ENCODE measurements at regions of chr4 and their contacts with region 1.

Region 1: DNA sequence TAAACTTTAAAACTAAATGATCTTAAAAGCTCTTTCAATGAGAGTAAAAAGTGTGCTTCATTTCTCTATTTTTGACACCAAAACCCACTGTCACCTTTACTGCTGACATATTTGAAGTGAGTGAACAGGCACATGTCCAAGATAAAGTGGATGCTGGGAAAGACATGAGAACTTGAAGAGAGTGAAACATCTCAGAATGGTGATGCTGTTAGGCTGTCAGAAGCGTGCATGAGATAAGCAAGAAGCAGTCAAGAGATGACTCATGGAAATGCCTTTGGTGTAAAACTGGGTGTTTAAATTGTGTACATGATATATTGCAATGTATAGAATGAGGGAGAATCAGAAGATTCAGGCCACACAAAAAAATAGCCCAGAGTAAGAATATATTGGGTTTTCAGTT is 21.8 kb upstream of the GBA3 start:
- DNase-seq: no peak
- H3K4me3 Mint-ChIP-seq: no peak overlapping the region
- H3K27ac Mint-ChIP-seq: peak overlapping the region; percentile 9
- H3K4me1 Mint-ChIP-seq: peaks cover 53% of the 10 kb centered on the region
- H3K27me3 Mint-ChIP-seq: no peaks in the 10 kb centered on the region

Region 2: GRCh38 chr4:22416403-22416802 is 254.6 kb before region 1 on chr4:
- intact Hi-C with region 1: loop called (anchors 5 kb)
- DNase-seq: no peak
- H3K4me3 Mint-ChIP-seq: peak overlapping the region; percentile 53
- H3K27ac Mint-ChIP-seq: peak overlapping the region; percentile 73
- H3K4me1 Mint-ChIP-seq: peaks cover 35% of the 10 kb centered on the region
- H3K27me3 Mint-ChIP-seq: no peaks in the 10 kb centered on the region

Region 3: GRCh38 chr4:22444813-22445212 is 226.1 kb before region 1 on chr4:
- intact Hi-C with region 1: loop called (anchors 1 kb)
- DNase-seq: no peak
- H3K4me3 Mint-ChIP-seq: peak overlapping the region; percentile 79
- H3K27ac Mint-ChIP-seq: peak overlapping the region; percentile 94
- H3K4me1 Mint-ChIP-seq: peaks cover 48% of the 10 kb centered on the region
- H3K27me3 Mint-ChIP-seq: no peaks in the 10 kb centered on the region

Region 4: DNA sequence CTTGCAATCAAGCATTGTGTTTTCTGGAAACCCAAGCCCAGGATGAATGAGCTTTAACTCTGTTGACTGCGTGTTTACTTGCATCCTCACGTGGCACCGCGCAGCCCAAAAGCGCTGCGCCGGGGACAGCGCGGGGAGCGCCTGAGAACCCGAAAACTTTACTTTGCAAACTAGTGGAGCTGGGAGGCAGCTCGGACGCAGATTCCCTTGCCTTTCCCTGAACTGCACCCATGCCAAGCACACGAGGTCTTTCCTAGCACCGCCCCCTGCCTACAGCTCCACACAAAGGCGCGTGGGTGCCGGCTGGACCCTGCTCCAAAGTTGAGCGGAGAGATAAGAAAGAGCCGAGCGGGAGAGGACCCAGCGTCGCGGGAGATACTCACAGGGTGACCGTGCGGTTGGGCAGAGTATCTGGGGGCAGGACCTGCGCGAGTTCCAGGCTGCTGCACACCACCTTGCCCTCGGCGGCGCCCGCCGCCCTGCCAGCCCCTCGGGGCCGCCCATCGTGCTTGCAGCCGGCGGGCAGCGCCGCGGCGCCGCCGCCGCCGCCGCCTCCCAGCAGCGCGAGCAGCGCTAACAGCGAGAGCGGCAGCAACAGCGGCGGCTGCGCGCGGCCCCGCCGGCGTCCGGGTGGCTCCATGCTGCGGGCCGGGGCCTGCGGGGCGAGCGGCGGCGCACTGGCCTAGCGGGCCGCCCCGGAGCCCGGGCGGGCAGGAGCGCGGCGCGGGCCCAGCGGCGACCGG is 155.6 kb before region 1 on chr4:
- intact Hi-C with region 1: loop called (anchors 5 kb)
- DNase-seq: peak; percentile 46
- H3K4me3 Mint-ChIP-seq: peak overlapping the region; percentile 100
- H3K27ac Mint-ChIP-seq: peak overlapping the region; percentile 98
- H3K4me1 Mint-ChIP-seq: peaks cover 25% of the 10 kb centered on the region
- H3K27me3 Mint-ChIP-seq: no peaks in the 10 kb centered on the region

Region 5: GRCh38 chr4:22688236-22688635 is 17.3 kb after region 1 on chr4:
- intact Hi-C with region 1: loop called (anchors 2 kb)
- DNase-seq: no peak
- H3K4me3 Mint-ChIP-seq: no peak overlapping the region
- H3K27ac Mint-ChIP-seq: no peak overlapping the region
- H3K4me1 Mint-ChIP-seq: peaks cover 9% of the 10 kb centered on the region
- H3K27me3 Mint-ChIP-seq: peaks cover 2% of the 10 kb centered on the region

Measured in activated T-helper 2 cell treated with anti-CD3 and anti-CD28 coated beads, Interferon-gamma antibody, Interleukin-2, Interleukin-4, amounts not matched to agents 10 μg/mL and 5 μg/mL and 100 μg/mL, durations not matched to agents 14 hours and 24 hours and 36 hours (primary cell).